Caco-2 (cell line): ENCODE measurements at regions of chr20 and their contacts with region 1.

Region 1: GRCh38 chr20:36064658-36065426 is 89.7 kb upstream of the EPB41L1 start:
- DNase-seq: peak; percentile 97 to 100
- H3K4me3 ChIP-seq: peak overlapping the region; percentile 54
- H3K4me3 Mint-ChIP-seq: peak overlapping the region; percentile 81
- H3K27ac Mint-ChIP-seq: peak overlapping the region; percentile 75
- H3K4me1 ChIP-seq: peaks cover 28% of the 10 kb centered on the region
- H3K4me1 Mint-ChIP-seq: peaks cover 10% of the 10 kb centered on the region
- H3K27me3 ChIP-seq: no peaks in the 10 kb centered on the region
- H3K27me3 Mint-ChIP-seq: no peaks in the 10 kb centered on the region
- CTCF ChIP-seq: peak in 1 of 2 experiments; percentile 13

Region 2: GRCh38 chr20:35463455-35464300 is 601.2 kb before region 1 on chr20:
- CTCF ChIA-PET with region 1: no interaction called
- POLR2A ChIA-PET with region 1: interaction called, 10 read pairs
- intact Hi-C with region 1: no loop called
- DNase-seq: peak; percentile 83 to 88
- H3K4me3 ChIP-seq: no peak overlapping the region
- H3K4me3 Mint-ChIP-seq: no peak overlapping the region
- H3K27ac Mint-ChIP-seq: no peak overlapping the region
- H3K4me1 ChIP-seq: peaks cover 13% of the 10 kb centered on the region
- H3K4me1 Mint-ChIP-seq: peaks cover 18% of the 10 kb centered on the region
- H3K27me3 ChIP-seq: no peaks in the 10 kb centered on the region
- H3K27me3 Mint-ChIP-seq: no peaks in the 10 kb centered on the region
- CTCF ChIP-seq: peak; percentile 96 to 97

Region 3: GRCh38 chr20:36050436-36051317 is 14.2 kb before region 1 on chr20:
- CTCF ChIA-PET with region 1: interaction called, 5 read pairs
- POLR2A ChIA-PET with region 1: interaction called, 3 read pairs
- intact Hi-C with region 1: loop called (anchors 1 kb)
- DNase-seq: peak; percentile 99
- H3K4me3 ChIP-seq: peak overlapping the region; percentile 67
- H3K4me3 Mint-ChIP-seq: peak overlapping the region; percentile 69
- H3K27ac Mint-ChIP-seq: peak overlapping the region; percentile 88
- H3K4me1 ChIP-seq: peaks cover 34% of the 10 kb centered on the region
- H3K4me1 Mint-ChIP-seq: peaks cover 44% of the 10 kb centered on the region
- H3K27me3 ChIP-seq: no peaks in the 10 kb centered on the region
- H3K27me3 Mint-ChIP-seq: no peaks in the 10 kb centered on the region
- CTCF ChIP-seq: no peak

Region 4: DNA sequence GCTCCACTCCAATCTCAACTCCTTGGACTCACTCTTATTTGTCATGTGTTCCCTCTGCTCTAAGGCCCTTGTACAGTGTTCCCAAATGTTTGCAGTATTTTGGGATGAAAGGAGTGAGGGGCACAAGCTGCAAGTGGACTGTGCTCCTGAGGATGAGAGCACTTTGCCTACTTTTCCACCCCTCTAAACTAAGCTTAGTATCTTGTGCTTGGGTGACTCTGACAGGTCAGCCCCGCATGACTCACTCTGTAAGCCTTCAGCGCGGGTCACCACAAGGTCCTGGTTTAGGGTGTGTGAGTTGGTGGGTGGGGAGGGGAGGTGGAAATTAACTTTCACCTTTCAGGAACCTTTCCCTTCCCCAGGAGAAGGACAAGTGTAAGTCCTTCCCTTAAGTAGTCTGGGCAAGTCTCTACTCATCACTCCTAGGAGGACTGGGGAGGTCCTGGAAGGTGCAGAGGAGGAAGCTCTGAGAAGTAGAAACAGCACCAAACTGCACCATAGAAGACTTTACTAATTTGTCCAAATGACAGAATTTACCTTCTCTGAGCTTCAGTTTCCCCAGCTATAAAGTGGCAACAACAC is 20.9 kb after region 1 on chr20:
- CTCF ChIA-PET with region 1: interaction called, 14 read pairs
- POLR2A ChIA-PET with region 1: interaction called, 11 read pairs
- intact Hi-C with region 1: loop called (anchors 1 kb)
- DNase-seq: peak; percentile 95 to 99
- H3K4me3 ChIP-seq: no peak overlapping the region
- H3K4me3 Mint-ChIP-seq: peak overlapping the region; percentile 66
- H3K27ac Mint-ChIP-seq: peak overlapping the region; percentile 99
- H3K4me1 ChIP-seq: peaks cover 80% of the 10 kb centered on the region
- H3K4me1 Mint-ChIP-seq: peaks cover 67% of the 10 kb centered on the region
- H3K27me3 ChIP-seq: no peaks in the 10 kb centered on the region
- H3K27me3 Mint-ChIP-seq: no peaks in the 10 kb centered on the region
- CTCF ChIP-seq: no peak

Region 5: DNA sequence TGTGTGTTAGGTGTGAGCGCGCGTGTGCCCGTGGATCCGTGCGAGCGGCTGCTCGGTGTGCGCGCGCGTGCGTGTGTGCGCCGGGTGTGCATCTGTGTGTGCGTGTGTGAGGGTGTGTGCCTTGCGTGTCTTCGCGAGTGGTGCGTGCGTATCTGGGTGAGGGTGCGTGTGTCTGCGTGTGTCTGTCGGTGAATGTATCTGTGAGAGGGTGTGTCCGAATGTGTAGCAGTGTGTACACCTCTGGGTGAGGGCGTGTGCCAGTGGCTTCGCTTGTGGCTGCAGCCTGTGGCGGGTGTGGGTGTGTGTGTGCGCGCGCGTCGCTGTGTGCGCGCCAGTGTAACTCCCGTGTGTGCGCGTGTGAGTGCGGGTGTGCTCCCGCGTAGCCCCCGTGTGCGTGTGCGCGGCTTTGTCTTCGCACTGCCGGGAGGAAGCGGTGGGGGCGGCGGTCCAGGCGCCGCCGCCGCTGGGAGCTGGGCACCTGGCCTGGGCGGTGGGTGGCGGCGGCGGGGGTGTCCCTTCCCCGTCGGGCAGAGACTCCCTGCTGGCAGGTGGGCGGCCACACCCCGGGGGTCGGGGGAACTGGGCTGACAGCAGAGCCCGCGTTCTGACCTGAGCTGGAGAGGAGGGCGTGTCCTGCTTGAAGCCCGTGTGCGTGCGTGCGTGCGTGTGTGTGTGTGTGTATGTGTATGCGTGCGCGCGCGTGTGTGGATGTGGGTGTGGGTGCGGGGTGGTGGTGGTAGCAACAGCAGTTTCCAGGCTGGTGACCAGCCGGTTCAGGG is 28.4 kb after region 1 on chr20:
- CTCF ChIA-PET with region 1: interaction called, 6 read pairs
- POLR2A ChIA-PET with region 1: interaction called, 7 read pairs
- intact Hi-C with region 1: loop called (anchors 1 kb)
- DNase-seq: peak; percentile 77 to 83
- H3K4me3 ChIP-seq: peak overlapping the region; percentile 86
- H3K4me3 Mint-ChIP-seq: peak overlapping the region; percentile 93
- H3K27ac Mint-ChIP-seq: peak overlapping the region; percentile 82
- H3K4me1 ChIP-seq: peaks cover 60% of the 10 kb centered on the region
- H3K4me1 Mint-ChIP-seq: peaks cover 43% of the 10 kb centered on the region
- H3K27me3 ChIP-seq: no peaks in the 10 kb centered on the region
- H3K27me3 Mint-ChIP-seq: no peaks in the 10 kb centered on the region
- CTCF ChIP-seq: no peak

Region 6: GRCh38 chr20:36121981-36122930 is 57.4 kb after region 1 on chr20:
- CTCF ChIA-PET with region 1: interaction called, 4 read pairs
- POLR2A ChIA-PET with region 1: no interaction called
- intact Hi-C with region 1: loop called (anchors 2 kb)
- DNase-seq: peak; percentile 90 to 93
- H3K4me3 ChIP-seq: no peak overlapping the region
- H3K4me3 Mint-ChIP-seq: no peak overlapping the region
- H3K27ac Mint-ChIP-seq: peak overlapping the region; percentile 38
- H3K4me1 ChIP-seq: peaks cover 22% of the 10 kb centered on the region
- H3K4me1 Mint-ChIP-seq: peaks cover 22% of the 10 kb centered on the region
- H3K27me3 ChIP-seq: no peaks in the 10 kb centered on the region
- H3K27me3 Mint-ChIP-seq: no peaks in the 10 kb centered on the region
- CTCF ChIP-seq: no peak

Region 7: DNA sequence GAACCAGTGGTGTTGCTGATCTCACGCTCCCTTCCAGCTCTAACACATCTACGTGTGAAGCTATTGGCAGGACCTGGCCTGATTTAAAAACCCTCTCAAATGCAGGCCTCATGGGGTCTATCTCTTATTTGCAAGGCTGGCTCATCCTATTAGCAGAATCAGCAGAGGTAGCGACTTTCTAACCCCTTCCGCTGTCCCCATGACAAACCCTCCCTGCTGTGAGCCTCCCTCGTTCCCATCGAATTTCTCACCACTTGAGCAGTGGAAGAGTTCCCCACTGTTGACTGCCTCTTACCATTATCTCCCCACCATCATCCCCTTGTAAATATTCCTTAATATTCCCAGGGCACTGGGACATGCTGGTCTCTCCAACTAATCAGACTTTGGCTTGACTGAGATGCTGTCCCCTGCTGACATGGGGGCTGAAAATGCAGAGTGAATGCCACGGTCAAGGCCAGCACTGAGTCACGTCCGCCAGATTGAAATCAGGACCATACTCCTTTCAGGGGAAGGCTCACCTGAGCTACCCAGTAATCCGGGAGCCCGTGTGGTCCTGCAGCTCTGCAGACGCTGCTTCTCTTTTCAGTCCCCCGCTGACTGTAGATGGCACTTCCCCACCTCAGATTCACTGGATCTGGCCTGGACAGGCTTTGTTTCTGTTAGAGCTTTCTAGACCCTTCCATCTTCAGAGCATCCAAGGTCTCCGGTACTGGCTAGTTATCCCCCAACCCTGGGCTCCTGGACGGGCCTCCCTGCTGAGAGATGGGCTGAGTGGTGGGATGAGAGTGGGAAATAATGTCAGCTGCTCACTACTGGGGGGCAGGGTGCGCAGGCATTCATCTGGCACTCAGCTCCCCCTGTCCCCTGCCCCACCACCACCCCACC is 194.6 kb after region 1 on chr20:
- CTCF ChIA-PET with region 1: no interaction called
- POLR2A ChIA-PET with region 1: no interaction called
- intact Hi-C with region 1: no loop called
- DNase-seq: peak in 1 of 2 experiments; percentile 37
- H3K4me3 ChIP-seq: no peak overlapping the region
- H3K4me3 Mint-ChIP-seq: no peak overlapping the region
- H3K27ac Mint-ChIP-seq: no peak overlapping the region
- H3K4me1 ChIP-seq: no peaks in the 10 kb centered on the region
- H3K4me1 Mint-ChIP-seq: no peaks in the 10 kb centered on the region
- H3K27me3 ChIP-seq: no peaks in the 10 kb centered on the region
- H3K27me3 Mint-ChIP-seq: peaks cover 2% of the 10 kb centered on the region
- CTCF ChIP-seq: no peak

Region 8: GRCh38 chr20:36447101-36447500 is 382.3 kb after region 1 on chr20:
- CTCF ChIA-PET with region 1: no interaction called
- POLR2A ChIA-PET with region 1: no interaction called
- intact Hi-C with region 1: loop called (anchors 10 kb)
- DNase-seq: peak; percentile 79 to 82
- H3K4me3 ChIP-seq: no peak overlapping the region
- H3K4me3 Mint-ChIP-seq: no peak overlapping the region
- H3K27ac Mint-ChIP-seq: no peak overlapping the region
- H3K4me1 ChIP-seq: peaks cover 8% of the 10 kb centered on the region
- H3K4me1 Mint-ChIP-seq: no peaks in the 10 kb centered on the region
- H3K27me3 ChIP-seq: no peaks in the 10 kb centered on the region
- H3K27me3 Mint-ChIP-seq: no peaks in the 10 kb centered on the region
- CTCF ChIP-seq: no peak